ENCODE measurements at regions of chr9 and their contacts with region 1.

Region 1: DNA sequence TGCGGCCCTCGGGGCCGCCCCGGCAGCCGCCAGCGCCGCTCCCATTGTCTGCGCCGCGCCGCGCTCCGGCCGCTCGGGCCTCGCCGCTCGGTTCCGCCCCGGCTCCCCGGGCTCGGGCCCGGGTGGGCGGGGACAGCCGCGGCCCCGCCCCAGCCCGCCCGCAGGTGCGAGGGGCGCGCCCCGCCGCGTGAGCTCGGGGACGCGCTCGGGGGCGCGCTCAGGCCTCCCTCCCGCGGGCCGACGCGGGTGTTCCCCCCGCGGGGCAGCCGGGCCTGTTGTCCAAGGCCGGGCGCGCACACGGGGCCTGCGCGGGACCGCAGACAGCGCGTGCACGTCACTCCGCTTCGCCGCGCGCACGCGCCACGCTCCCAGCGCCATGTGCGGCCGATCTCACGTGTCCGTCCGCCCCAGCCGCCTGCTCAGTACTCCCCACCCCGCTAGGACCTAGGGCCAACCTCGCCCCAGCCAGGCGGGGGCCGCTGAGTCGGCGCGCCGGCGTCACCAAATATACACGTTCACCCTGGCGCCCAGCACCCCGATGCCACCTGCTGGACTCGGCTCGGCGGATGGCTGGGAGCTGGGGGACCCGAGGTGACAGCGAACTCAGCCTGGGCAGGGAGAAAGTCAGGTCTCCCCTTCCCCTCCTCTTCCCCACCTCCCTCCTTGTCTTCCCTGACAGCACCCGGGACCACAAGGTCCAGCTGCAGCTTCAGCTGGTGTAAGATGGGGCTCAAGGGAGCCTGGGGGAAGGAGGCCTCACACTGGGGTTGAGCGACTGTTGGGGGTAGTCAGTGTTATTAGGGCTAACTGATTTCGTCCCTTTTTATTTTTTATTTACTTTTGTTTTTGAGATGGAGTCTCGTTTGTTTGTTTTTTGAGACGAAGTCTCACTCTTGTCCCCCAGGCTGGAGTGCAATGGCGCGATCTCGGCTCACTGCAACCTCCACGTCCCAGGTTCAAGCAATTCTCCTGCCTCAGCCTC is 14.3 kb downstream of the GBGT1 start:
- DNase-seq: peak; percentile 91
- ATAC-seq: peak; percentile 76 to 81

Region 2: DNA sequence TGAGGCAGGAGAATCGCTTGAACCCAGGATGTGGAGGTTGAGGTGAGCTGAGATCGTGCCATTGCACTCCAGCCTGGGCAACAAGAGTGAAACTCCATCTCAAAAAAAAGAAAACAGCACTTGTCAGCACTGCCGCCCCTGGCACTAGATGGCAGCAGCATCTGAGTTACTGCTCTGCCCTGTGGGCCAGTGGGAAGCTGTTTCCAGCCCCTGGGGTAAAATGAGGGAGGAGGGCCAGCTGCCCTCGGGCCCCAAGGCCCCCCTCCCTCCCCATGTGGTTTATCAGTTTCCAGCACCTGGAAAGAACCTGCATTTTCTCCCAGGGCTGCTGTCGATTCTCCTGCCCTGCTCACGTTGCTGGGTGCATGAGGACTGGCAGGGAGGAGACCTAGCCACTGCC is 100.8 kb before region 1 on chr9:
- intact Hi-C with region 1: loop called (anchors 5 to 10 kb)
- DNase-seq: no peak
- ATAC-seq: peak in 1 of 2 donors; percentile 14

Region 3: DNA sequence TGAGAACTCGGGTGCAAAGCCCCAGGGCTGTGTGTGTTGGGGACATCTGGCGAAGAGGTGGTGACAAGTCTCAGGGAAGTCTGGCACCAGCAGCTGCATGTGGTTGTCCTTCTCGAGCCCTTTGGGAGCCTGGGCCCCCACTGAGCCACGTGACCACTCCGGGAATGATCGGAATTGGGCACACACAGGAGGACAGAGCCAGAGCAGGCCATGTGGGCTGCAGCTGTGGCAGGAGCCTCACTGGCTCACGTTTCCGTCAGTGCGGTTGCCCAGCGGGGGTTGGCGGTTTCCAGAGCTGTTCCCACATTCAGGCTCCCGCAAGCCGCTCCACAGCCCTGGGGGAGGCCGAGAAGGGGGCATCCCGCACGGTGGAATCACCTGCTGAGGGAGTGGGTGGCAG is 94.5 kb before region 1 on chr9:
- intact Hi-C with region 1: loop called in 1 of 2 experiments (anchors 5 kb)
- DNase-seq: peak; percentile 76
- ATAC-seq: peak; percentile 81 to 93

Region 4: DNA sequence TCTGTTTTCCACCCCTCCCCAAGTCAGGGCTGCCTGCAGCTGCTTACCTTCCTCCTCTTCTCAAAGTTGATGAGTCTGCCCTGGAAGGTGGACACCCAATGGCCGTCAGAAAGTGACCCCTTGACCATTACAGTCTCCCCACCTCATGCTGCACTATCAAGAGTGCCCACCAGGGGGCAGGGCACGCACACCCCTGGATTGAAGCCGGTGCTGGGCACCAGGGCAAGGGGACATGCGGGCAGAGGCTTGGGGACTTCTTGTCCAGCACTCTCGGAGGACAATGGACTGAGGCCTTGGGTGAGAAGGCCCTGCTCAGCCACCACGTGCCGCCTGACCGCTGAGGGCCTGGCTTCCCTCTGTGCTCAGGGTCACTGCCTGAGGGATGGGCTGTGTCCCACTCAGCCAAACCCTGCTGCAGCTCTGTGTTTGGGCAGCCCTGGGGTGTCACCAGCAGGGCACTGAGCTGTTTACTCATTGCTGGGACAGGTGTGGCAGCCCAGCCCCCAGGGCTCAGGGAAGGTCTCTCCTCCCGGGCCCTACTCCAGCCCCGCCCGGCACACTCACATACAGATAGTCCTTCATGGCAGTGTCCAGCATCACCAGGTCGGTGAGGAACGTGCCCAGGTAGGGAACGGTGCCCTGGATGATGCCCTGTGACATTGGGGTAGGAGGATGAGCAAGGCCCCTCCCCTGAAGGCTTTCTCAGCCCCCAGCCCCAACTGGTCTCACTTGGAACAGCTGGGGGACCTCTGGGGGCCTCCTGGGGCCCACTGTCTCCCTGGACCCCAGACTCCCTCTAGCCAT is 46.0 kb before region 1 on chr9:
- intact Hi-C with region 1: loop called (anchors 1 to 2 kb)
- DNase-seq: peak; percentile 73
- ATAC-seq: peak; percentile 73 to 82